ENCODE measurements at regions of chr9 and their contacts with region 1.

Region 1: DNA sequence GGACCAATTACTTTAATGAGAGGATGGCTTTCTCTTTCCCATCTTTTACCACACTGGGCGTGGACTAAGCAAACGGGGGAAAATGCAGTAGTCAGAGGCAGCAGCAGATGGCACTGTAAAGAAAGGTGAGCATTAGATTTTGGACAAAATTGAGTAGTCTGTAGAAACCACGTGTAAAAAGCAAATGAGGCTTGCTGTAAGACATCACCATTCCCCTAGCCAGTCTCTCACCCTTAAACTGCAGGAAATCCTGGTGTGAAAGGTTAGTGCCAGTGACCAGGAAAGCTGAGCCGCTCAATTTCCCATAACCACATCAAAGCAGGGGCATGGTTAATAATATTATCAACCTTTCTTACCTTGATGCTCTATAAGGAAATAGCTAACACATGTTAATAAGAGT is 31.8 kb downstream of the SPATA31C2 start:
- DNase-seq: peak in 1 of 5 donors; percentile 10
- H3K4me3 ChIP-seq: no peak overlapping the region
- H3K4me3 Mint-ChIP-seq: no peak overlapping the region
- H3K27ac ChIP-seq: no peak overlapping the region
- H3K27ac Mint-ChIP-seq: no peak overlapping the region
- H3K4me1 ChIP-seq: no peaks in the 10 kb centered on the region
- H3K4me1 Mint-ChIP-seq: peaks cover 0 to 5% (median 4%) of the 10 kb centered on the region in 4 donors
- H3K27me3 ChIP-seq: no peaks in the 10 kb centered on the region
- H3K27me3 Mint-ChIP-seq: peaks cover 22 to 23% of the 10 kb centered on the region in 2 donors

Region 2: GRCh38 chr9:87783180-87783579 is 323.3 kb before region 1 on chr9:
- CTCF ChIA-PET with region 1: no interaction called
- POLR2A ChIA-PET with region 1: no interaction called
- intact Hi-C with region 1: no loop called
- DNase-seq: no peak
- H3K4me3 ChIP-seq: no peak overlapping the region
- H3K4me3 Mint-ChIP-seq: no peak overlapping the region
- H3K27ac ChIP-seq: no peak overlapping the region
- H3K27ac Mint-ChIP-seq: no peak overlapping the region
- H3K4me1 ChIP-seq: no peaks in the 10 kb centered on the region
- H3K4me1 Mint-ChIP-seq: no peaks in the 10 kb centered on the region
- H3K27me3 ChIP-seq: no peaks in the 10 kb centered on the region
- H3K27me3 Mint-ChIP-seq: peaks cover 0 to 2% of the 10 kb centered on the region in 2 donors

Region 3: DNA sequence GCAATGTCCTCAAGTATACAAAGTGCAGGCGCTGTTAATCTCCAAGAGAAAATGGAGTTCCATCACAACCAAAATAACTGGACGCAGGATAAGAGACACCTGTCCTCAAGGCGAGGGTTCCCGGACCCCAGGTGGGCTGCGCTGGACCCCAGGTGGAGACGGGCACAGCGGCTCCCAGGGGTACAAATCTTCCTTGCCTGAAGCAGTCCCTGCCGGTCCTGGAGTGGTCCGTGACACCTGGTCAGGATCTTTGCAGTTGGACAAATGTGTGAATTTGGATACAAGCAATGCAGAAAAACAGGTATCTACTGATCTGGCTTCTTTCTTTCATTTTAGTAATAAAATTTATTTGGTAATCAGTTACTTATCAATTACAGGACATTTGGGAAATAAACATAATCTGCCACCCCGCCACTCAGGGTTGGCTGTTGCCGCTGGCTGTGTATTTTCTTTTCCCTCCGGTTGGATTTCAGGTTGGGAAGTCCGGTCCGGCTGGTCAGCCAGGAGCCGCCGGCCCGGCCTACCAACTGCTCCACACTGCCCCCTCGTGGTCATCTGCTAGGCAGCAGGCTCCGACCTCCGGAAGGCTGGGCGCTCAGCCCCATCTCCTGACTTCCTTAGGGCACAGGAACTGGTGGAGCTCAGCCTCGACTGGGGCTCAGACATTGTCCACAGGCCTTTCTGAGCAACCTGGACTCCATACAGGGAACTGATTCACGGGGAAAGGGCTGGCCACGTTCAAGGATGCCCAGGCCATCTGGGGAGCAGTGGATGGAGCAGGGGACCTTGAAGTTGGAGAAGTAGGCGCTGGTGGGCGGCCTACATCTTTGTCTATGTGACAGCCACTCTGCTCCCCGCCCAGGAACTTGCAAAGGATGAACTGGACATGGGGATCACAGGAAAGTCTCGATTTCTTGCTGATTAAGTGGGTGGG is 471.9 kb after region 1 on chr9:
- CTCF ChIA-PET with region 1: no interaction called
- POLR2A ChIA-PET with region 1: no interaction called
- intact Hi-C with region 1: loop called (anchors 1 kb)
- DNase-seq: peak; percentile 35 to 48 (median 43)
- H3K4me3 ChIP-seq: no peak overlapping the region
- H3K4me3 Mint-ChIP-seq: peak overlapping the region in 7 of 8 donors; percentile 6 to 76 (median 61)
- H3K27ac ChIP-seq: no peak overlapping the region
- H3K27ac Mint-ChIP-seq: peak overlapping the region in 1 of 7 donors; percentile 57
- H3K4me1 ChIP-seq: peaks cover 7% of the 10 kb centered on the region
- H3K4me1 Mint-ChIP-seq: peaks cover 0 to 3% (median 2%) of the 10 kb centered on the region in 4 donors
- H3K27me3 ChIP-seq: no peaks in the 10 kb centered on the region
- H3K27me3 Mint-ChIP-seq: peaks cover 10 to 15% of the 10 kb centered on the region in 2 donors

Measured in CD4-positive, alpha-beta memory T cell (primary cell).